GM12878 (cell line): ENCODE measurements at regions of chr4 and their contacts with region 1.

Region 1: GRCh38 chr4:72295966-72296557 is 264.3 kb downstream of the NPFFR2 start:
- DNase-seq: no peak
- ATAC-seq: peak; percentile 76
- H3K4me3 ChIP-seq: no peak overlapping the region
- H3K27ac ChIP-seq: no peak overlapping the region
- H3K4me1 ChIP-seq: no peaks in the 10 kb centered on the region
- H3K27me3 ChIP-seq: no peaks in the 10 kb centered on the region; a peak in 1 of 4 replicates
- CTCF ChIP-seq: peak; percentile 29 to 53 (median 34); a peak in 3 of 6 replicates
- EP300 ChIP-seq: no peak
- POLR2A ChIP-seq: no peak
- RAD21 ChIP-seq: peak; percentile 59; the same call in 1 of the 2 replicates

Region 2: DNA sequence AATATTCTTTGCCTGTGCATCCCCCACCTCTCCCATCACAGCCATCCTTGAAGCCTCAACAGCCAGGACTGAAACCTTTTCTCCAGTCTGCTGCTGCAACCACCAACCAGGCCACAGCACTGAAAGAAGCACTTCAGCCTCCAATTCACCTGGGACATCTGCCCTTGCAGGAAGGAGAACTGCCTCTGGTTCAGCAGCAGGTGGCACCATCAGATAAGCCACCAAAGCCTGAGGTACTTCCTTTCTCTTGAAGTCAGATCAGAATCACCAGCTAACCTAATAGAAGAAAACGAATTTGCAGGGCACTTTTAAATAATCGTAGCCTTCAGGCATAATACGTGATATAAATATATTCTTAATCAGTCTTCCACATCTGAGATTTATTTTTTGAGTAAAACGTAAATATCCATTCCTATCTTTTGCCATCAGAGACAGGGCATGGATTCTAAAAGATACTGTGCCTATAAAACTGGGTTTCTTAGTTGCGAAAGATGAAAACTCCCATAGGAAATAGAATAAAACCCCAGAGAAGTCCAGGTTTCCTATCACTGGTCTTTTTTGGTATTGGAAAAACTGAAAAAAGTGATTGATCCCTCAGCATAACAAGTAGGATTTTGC is 1694.5 kb before region 1 on chr4:
- CTCF ChIA-PET with region 1: no interaction called
- POLR2A ChIA-PET with region 1: no interaction called
- RAD21 ChIA-PET with region 1: no interaction called
- SMC1A ChIA-PET with region 1: no interaction called
- in situ Hi-C with region 1: loop called (anchors 25 kb)
- intact Hi-C with region 1: loop called (anchors 10 kb)
- DNase-seq: peak; percentile 34
- ATAC-seq: peak; percentile 98
- H3K4me3 ChIP-seq: no peak overlapping the region
- H3K27ac ChIP-seq: no peak overlapping the region
- H3K4me1 ChIP-seq: no peaks in the 10 kb centered on the region
- H3K27me3 ChIP-seq: no peaks in the 10 kb centered on the region; a peak in 1 of 4 replicates
- CTCF ChIP-seq: peak; percentile 90 to 94 (median 92)
- EP300 ChIP-seq: no peak
- POLR2A ChIP-seq: no peak
- RAD21 ChIP-seq: peak; percentile 99

Region 3: GRCh38 chr4:72275381-72275780 is 20.7 kb before region 1 on chr4:
- CTCF ChIA-PET with region 1: no interaction called
- POLR2A ChIA-PET with region 1: no interaction called
- RAD21 ChIA-PET with region 1: no interaction called
- SMC1A ChIA-PET with region 1: no interaction called
- in situ Hi-C with region 1: no loop called
- intact Hi-C with region 1: no loop called
- DNase-seq: no peak
- ATAC-seq: no peak
- H3K4me3 ChIP-seq: no peak overlapping the region
- H3K27ac ChIP-seq: no peak overlapping the region
- H3K4me1 ChIP-seq: no peaks in the 10 kb centered on the region
- H3K27me3 ChIP-seq: no peaks in the 10 kb centered on the region
- CTCF ChIP-seq: no peak
- EP300 ChIP-seq: no peak
- POLR2A ChIP-seq: no peak
- RAD21 ChIP-seq: no peak